Ovary (tissue), 10 donors: ENCODE measurements at regions of chr7 and their contacts with region 1.

Region 1: GRCh38 chr7:28596245-28596935 is 184.1 kb downstream of the CREB5 start:
- DNase-seq: no peak
- H3K4me3 ChIP-seq: no peak overlapping the region
- H3K27ac ChIP-seq: no peak overlapping the region
- H3K4me1 ChIP-seq: no peaks in the 10 kb centered on the region
- H3K27me3 ChIP-seq: no peaks in the 10 kb centered on the region
- CTCF ChIP-seq: no peak
- EP300 ChIP-seq: no peak
- POLR2A ChIP-seq: no peak

Region 2: DNA sequence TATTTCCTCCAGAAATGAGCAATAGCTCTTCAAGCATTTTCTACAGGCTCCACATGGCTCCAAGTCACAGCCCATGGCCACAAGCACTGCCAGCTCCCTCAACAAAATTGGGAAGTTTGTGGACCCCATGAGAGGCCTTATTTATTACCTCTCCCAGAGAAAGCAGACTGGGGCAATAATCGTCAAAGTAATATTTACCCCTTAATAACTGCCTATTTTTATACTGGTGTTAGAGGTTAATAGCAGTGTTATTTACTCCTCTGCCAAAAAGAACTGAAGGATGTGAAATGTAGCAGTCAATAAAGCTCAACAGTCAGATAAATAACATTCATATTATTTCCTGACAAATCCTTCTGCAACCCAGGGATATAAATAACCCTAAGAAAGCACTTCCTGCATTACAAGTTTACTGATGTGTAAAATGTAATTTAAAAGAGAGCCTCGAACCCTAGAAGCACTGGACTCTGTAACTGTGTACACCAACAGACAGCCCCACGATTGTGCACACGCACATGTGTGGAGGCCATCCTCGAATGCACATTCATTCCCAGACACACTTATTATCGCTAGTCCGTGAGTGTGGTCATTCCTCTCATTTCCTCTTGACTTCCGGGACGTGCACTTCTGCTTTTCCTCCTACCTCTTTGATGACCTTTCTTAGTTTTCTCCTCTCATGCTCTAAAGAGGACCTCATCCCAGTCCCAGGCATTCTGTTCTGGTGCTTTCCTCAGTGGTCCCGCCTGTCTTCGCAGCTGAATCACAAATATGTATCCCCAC is 1196.4 kb before region 1 on chr7:
- intact Hi-C with region 1: loop called in 1 of 4 experiments (anchors 5 kb)
- DNase-seq: no peak
- H3K4me3 ChIP-seq: no peak overlapping the region
- H3K27ac ChIP-seq: no peak overlapping the region
- H3K4me1 ChIP-seq: peaks cover 5% of the 10 kb centered on the region
- H3K27me3 ChIP-seq: no peaks in the 10 kb centered on the region
- CTCF ChIP-seq: no peak
- EP300 ChIP-seq: no peak
- POLR2A ChIP-seq: no peak